RWPE1 (cell line): ENCODE measurements at regions of chr19 and their contacts with region 1.

Region 1: DNA sequence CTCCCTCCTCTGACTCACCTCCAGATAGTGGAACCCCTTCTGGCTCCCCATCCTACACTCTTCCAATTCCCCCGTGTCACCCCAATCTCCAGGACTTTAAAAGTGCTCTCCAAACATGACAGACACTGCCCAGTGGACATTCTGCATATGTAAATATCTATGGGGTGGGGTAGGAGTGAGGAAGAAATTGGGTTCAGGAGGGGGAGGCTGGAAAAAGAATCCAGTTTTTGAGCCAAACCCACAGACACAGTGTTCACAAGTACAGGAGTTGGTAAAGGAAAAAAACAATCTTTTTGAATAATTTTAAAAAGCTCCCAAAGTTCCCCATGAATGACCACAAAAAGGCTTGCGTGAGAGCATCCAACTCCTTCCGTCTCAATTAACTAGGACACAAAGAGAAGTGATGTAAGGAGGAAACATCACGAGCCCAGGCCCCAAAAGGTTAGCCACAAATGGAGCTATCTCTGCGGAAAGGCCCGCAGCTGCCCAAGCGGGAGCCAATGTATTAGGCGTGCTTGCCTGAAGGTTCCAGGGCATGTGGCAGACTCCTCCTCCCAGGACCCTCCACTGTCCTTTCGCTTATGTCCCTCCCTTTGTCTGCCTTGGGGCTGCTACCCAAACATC is 18.0 kb downstream of the ZC3H4 start:
- DNase-seq: no peak
- H3K27ac ChIP-seq: peak overlapping the region; percentile 73
- CTCF ChIP-seq: no peak

Region 2: GRCh38 chr19:47069795-47070194 is 25.8 kb before region 1 on chr19:
- CTCF ChIA-PET with region 1: no interaction called
- POLR2A ChIA-PET with region 1: no interaction called
- DNase-seq: no peak
- H3K27ac ChIP-seq: peak overlapping the region; percentile 46; the same call in 1 of the 2 replicates
- CTCF ChIP-seq: no peak

Region 3: DNA sequence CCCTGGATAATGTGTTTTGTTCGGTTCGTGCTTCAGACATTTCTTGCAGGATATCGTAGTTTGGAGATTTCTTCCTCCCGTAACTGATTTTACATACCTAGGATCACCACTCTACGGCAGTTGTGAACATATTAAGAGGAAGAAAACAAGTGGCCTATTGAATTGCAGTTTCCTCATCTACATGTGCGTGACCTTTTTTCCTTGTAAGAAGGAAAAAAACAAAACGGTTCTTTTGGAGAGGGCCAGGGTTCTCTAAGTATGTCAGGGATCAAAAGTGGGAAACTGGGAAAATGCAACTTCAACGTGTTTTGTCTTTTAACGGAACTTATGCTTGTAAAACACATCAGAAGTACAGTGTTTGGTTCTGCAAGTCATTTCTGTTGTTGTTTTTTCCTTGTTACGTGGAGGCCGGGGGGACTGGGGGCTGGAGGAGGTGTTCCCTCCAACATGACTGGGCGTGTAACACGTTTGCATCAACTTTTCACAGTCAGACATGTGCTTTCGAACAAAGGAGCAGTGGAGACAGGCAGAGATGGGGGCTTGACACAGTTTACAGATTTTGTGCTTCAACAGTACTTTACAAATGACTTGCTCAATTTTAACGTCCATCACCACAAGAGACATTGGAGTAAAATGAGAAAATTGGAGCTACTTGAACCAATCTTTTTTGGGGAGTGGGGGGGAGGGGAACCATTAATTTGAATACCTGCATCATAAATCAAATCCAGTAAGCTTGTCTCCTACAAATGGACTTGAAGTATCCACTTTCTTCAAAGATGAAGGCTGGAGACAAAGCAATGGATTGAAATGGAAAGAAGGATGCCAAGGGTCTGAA is 14.2 kb after region 1 on chr19:
- CTCF ChIA-PET with region 1: interaction called, 3 read pairs
- POLR2A ChIA-PET with region 1: interaction called, 19 read pairs
- DNase-seq: no peak
- H3K27ac ChIP-seq: peak overlapping the region; percentile 65
- CTCF ChIP-seq: no peak

Region 4: GRCh38 chr19:47512183-47512947 is 416.8 kb after region 1 on chr19:
- CTCF ChIA-PET with region 1: no interaction called
- POLR2A ChIA-PET with region 1: no interaction called
- DNase-seq: no peak
- H3K27ac ChIP-seq: peak overlapping the region; percentile 96
- CTCF ChIP-seq: no peak